Ascending aorta (tissue), 2 donors: ENCODE measurements at regions of chr16 and their contacts with region 1.

Region 1: GRCh38 chr16:55543472-55543871 is 23.0 kb upstream of the CAPNS2 start:
- DNase-seq: no peak
- H3K4me3 ChIP-seq: no peak overlapping the region
- H3K27ac ChIP-seq: no peak overlapping the region
- H3K4me1 ChIP-seq: no peaks in the 10 kb centered on the region
- H3K27me3 ChIP-seq: no peaks in the 10 kb centered on the region
- CTCF ChIP-seq: peak; percentile 26 to 53 (median 50)

Region 2: GRCh38 chr16:55508941-55509931 is 34.2 kb before region 1 on chr16 and contains the start of gene LPCAT2:
- intact Hi-C with region 1: loop called (anchors 5 kb)
- DNase-seq: peak in 1 of 2 donors; percentile 92
- H3K4me3 ChIP-seq: peak within 1 kb of the TSS; percentile 65 to 78
- H3K27ac ChIP-seq: peak within 1 kb of the TSS; percentile 44 to 61
- H3K4me1 ChIP-seq: no peaks in the 10 kb centered on the region
- H3K27me3 ChIP-seq: no peaks in the 10 kb centered on the region
- CTCF ChIP-seq: no peak
- total RNA-seq, gene LPCAT2: 44.2 TPM

Region 3: GRCh38 chr16:55701442-55702319 is 158.2 kb after region 1 on chr16:
- intact Hi-C with region 1: loop called (anchors 10 kb)
- DNase-seq: peak in 1 of 2 donors; percentile 70
- H3K4me3 ChIP-seq: no peak overlapping the region
- H3K27ac ChIP-seq: no peak overlapping the region
- H3K4me1 ChIP-seq: no peaks in the 10 kb centered on the region
- H3K27me3 ChIP-seq: no peaks in the 10 kb centered on the region
- CTCF ChIP-seq: peak; percentile 25 to 51 (median 27)

Region 4: GRCh38 chr16:55842369-55843104 is 299.1 kb after region 1 on chr16:
- intact Hi-C with region 1: loop called (anchors 2 kb)
- DNase-seq: no peak
- H3K4me3 ChIP-seq: no peak overlapping the region
- H3K27ac ChIP-seq: no peak overlapping the region
- H3K4me1 ChIP-seq: no peaks in the 10 kb centered on the region
- H3K27me3 ChIP-seq: no peaks in the 10 kb centered on the region
- CTCF ChIP-seq: peak; percentile 59 to 78 (median 76)